ENCODE measurements at regions of chr22 and their contacts with region 1.

Region 1: GRCh38 chr22:29689880-29690213 is 30.0 kb upstream of the CABP7 start:
- DNase-seq: peak; percentile 43
- H3K4me3 ChIP-seq: no peak overlapping the region
- H3K27ac ChIP-seq: no peak overlapping the region
- H3K4me1 ChIP-seq: no peaks in the 10 kb centered on the region
- H3K27me3 ChIP-seq: no peaks in the 10 kb centered on the region
- CTCF ChIP-seq: peak; percentile 73 to 83
- POLR2A ChIP-seq: no peak

Region 2: GRCh38 chr22:29679316-29679715 is 10.5 kb before region 1 on chr22:
- CTCF ChIA-PET with region 1: interaction called, 17 read pairs
- POLR2A ChIA-PET with region 1: no interaction called
- dilution Hi-C with region 1: no loop called
- intact Hi-C with region 1: no loop called
- DNase-seq: no peak
- H3K4me3 ChIP-seq: no peak overlapping the region
- H3K27ac ChIP-seq: no peak overlapping the region
- H3K4me1 ChIP-seq: no peaks in the 10 kb centered on the region
- H3K27me3 ChIP-seq: no peaks in the 10 kb centered on the region
- CTCF ChIP-seq: no peak
- POLR2A ChIP-seq: no peak

Region 3: GRCh38 chr22:29701155-29701999 is 11.5 kb after region 1 on chr22:
- CTCF ChIA-PET with region 1: interaction called, 30 read pairs
- POLR2A ChIA-PET with region 1: no interaction called
- dilution Hi-C with region 1: no loop called
- intact Hi-C with region 1: no loop called
- DNase-seq: peak; percentile 22
- H3K4me3 ChIP-seq: no peak overlapping the region
- H3K27ac ChIP-seq: no peak overlapping the region
- H3K4me1 ChIP-seq: peaks cover 10% of the 10 kb centered on the region
- H3K27me3 ChIP-seq: peaks cover 15% of the 10 kb centered on the region in 2 experiments
- CTCF ChIP-seq: peak; percentile 8 to 36
- POLR2A ChIP-seq: no peak

Measured in endothelial cell of umbilical vein (primary cell).